ENCODE measurements at regions of chr6 and their contacts with region 1.

Region 1: DNA sequence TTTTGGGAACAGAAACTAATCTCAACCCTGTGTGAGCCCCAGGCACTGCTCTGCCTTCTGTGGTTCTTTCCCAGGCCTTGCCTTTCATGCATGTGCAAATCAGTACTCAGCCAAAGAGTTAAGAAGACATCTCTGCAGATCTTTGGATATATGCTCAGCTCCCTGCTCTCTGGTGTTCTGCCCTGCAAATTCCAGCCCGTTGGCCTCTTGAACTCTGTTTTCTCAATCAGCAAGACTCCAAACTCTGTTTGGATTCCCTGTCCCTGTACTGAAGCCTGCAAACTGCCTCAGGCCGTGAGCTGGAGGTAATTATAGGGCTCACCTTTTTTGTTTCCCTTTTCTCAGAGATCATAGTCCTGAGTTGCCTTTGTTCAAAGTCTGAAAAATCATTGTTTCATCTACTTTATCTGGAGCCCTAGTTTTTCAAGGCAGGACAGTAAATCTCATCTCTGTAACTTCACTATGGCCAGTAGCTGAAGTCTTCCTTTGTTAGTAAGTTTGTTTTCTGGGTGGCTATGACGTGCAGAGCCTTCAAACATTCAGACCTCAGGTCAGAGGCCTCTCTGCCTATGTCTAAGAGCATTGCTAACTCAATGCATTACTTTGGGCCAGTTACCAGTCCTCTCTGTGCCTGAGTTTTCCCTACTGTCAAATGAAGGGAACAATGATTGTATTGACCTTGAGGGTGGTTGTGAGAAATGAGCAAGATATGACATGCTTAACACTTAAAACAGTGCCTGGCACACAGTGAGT is 15.9 kb upstream of the MDFI start:
- DNase-seq: no peak
- ATAC-seq: no peak
- H3K4me3 Mint-ChIP-seq: no peak overlapping the region
- H3K27ac Mint-ChIP-seq: no peak overlapping the region
- H3K4me1 Mint-ChIP-seq: no peaks in the 10 kb centered on the region
- H3K27me3 Mint-ChIP-seq: peaks cover 10% of the 10 kb centered on the region
- CTCF ChIP-seq: no peak

Region 2: GRCh38 chr6:41602864-41603608 is 19.3 kb before region 1 on chr6:
- CTCF ChIA-PET with region 1: no interaction called
- POLR2A ChIA-PET with region 1: no interaction called
- intact Hi-C with region 1: no loop called
- DNase-seq: peak; percentile 55
- ATAC-seq: peak; percentile 85
- H3K4me3 Mint-ChIP-seq: peak overlapping the region; percentile 46
- H3K27ac Mint-ChIP-seq: no peak overlapping the region
- H3K4me1 Mint-ChIP-seq: peaks cover 10% of the 10 kb centered on the region
- H3K27me3 Mint-ChIP-seq: no peaks in the 10 kb centered on the region
- CTCF ChIP-seq: no peak

Region 3: DNA sequence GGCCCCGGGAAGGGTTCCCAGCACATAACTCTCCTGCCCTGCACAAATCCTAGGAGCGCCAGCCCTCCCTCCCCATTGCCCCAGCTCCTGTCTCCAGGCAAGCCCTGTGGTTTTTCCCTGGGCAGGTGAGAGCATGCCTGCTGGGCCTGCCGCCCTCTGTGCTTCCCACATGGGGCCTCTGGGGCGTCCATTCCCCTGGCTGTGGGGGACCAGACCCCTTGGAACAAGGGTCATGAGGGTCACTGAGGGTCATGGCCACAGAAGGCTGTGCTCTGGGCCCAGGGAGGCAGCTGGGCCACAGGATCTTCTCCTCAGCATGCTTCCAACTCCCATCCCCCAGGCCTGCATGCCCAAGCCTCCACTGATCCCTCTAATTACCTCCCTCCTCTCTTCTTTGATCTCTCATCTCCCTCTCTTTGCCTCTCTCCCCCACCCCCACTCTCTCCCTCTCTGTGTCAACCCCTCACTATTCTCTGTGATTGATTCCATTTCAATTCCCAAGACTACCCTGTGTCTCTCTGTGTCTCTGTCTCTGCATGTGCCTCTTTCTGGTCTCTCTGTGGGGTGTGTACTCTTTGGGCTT is 22.0 kb after region 1 on chr6:
- CTCF ChIA-PET with region 1: no interaction called
- POLR2A ChIA-PET with region 1: no interaction called
- intact Hi-C with region 1: loop called (anchors 1 kb)
- DNase-seq: no peak
- ATAC-seq: no peak
- H3K4me3 Mint-ChIP-seq: no peak overlapping the region
- H3K27ac Mint-ChIP-seq: no peak overlapping the region
- H3K4me1 Mint-ChIP-seq: peaks cover 3% of the 10 kb centered on the region
- H3K27me3 Mint-ChIP-seq: peaks cover 35% of the 10 kb centered on the region
- CTCF ChIP-seq: no peak

Region 4: GRCh38 chr6:42471142-42471541 is 848.8 kb after region 1 on chr6:
- CTCF ChIA-PET with region 1: no interaction called
- POLR2A ChIA-PET with region 1: no interaction called
- intact Hi-C with region 1: no loop called
- DNase-seq: no peak
- ATAC-seq: no peak
- H3K4me3 Mint-ChIP-seq: no peak overlapping the region
- H3K27ac Mint-ChIP-seq: no peak overlapping the region
- H3K4me1 Mint-ChIP-seq: no peaks in the 10 kb centered on the region
- H3K27me3 Mint-ChIP-seq: peaks cover 4% of the 10 kb centered on the region
- CTCF ChIP-seq: no peak